ENCODE measurements at regions of chr14 and their contacts with region 1.

Region 1: GRCh38 chr14:63727774-63728728 is at the start of gene SGPP1:
- DNase-seq: peak; percentile 89
- H3K4me3 ChIP-seq: peak within 1 kb of the TSS; percentile 92 to 100 (median 96)
- H3K27ac ChIP-seq: peak within 1 kb of the TSS; percentile 86 to 93 (median 93)
- H3K4me1 ChIP-seq: peaks cover 0 to 25% (median 17%) of the 10 kb centered on the region in 4 donors
- H3K27me3 ChIP-seq: no peaks in the 10 kb centered on the region
- CTCF ChIP-seq: peak in 3 of 4 experiments; percentile 13 to 36 (median 32)
- EP300 ChIP-seq: no peak
- POLR2A ChIP-seq: peak; percentile 30 to 33
- total RNA-seq, gene SGPP1: 18.2 to 20.9 (median 18.9) TPM

Region 2: GRCh38 chr14:63388763-63389431 is 339.2 kb before region 1 on chr14:
- intact Hi-C with region 1: loop called (anchors 10 kb)
- DNase-seq: peak; percentile 78
- H3K4me3 ChIP-seq: no peak overlapping the region
- H3K27ac ChIP-seq: no peak overlapping the region
- H3K4me1 ChIP-seq: no peaks in the 10 kb centered on the region
- H3K27me3 ChIP-seq: no peaks in the 10 kb centered on the region
- CTCF ChIP-seq: peak; percentile 74 to 80 (median 76)
- EP300 ChIP-seq: no peak
- POLR2A ChIP-seq: no peak

Region 3: DNA sequence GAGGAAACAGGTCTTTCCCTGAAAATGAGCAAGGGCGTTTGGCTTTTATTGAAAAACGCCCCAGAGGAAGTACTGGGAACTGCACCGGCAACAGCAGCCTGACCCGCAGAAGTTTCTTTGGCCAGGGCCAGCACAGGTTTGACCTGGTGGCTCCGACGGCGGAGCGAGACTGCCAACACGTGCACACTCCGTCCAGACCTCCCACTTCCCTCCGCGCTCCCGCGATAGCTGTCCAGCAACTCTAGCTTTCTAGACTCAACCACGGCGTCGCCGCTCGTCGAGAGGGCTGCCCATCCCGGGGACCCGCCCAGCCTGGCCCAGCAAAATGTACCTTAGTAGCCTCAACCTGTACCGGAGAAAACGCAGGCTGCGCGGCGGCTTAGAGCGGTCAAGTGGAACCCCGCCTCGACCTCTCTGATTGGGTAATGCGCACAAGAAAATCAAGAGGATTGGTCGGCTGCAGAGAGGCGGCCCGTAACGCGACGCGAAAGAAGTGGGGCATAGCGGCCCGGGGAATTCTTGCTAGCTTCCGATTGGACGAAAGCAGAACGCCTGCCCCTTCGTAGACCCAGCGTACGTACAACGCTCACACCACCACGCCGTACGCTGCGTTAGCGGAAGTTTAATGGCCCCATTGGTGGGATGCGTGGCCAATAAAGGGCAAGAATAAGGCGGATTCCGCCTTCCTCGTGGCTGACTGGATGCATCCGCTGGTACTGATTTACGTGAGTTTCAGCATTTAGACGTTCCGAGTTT is 86.4 kb before region 1 on chr14 and contains the start of gene WDR89:
- intact Hi-C with region 1: loop called (anchors 5 kb)
- DNase-seq: peak; percentile 99
- H3K4me3 ChIP-seq: peak within 1 kb of the TSS; percentile 42 to 69 (median 54)
- H3K27ac ChIP-seq: peak within 1 kb of the TSS; percentile 84 to 95 (median 89)
- H3K4me1 ChIP-seq: peaks cover 0 to 12% (median 6%) of the 10 kb centered on the region in 4 donors
- H3K27me3 ChIP-seq: no peaks in the 10 kb centered on the region
- CTCF ChIP-seq: peak; percentile 45 to 85 (median 75)
- EP300 ChIP-seq: peak in 1 of 4 donors; percentile 10
- POLR2A ChIP-seq: peak in 1 of 2 donors; percentile 46
- total RNA-seq, gene WDR89: 5.0 to 10.0 (median 7.9) TPM

Region 4: DNA sequence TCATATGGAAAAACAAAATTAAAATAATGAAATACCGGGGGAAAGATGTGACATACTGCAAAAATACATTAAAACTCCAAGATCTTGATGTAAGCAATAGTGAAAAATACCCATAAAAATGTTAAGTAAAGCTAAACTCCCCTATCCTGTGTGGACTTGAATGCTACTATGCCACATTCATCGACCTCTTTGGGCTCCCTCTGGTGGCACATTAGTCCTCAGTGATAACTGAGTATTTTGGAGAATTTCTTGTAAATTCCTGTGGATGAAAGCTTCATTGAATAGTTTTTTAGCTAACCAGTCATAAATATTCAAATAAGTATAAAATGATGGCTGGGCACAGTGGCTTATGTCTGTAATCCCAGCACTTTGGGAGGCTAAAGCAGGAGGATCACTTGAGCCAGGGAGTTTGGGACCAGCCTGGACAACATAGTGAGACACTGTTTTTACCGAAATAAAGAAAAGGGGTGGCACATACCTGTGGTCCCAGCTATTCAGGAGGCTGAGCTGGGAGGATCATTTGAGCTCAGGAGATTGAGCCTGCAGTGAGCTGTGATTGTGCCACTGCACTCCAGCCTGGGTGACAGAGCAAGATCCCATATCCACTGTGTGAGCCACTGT is 42.2 kb after region 1 on chr14:
- intact Hi-C with region 1: loop called (anchors 1 kb)
- DNase-seq: no peak
- H3K4me3 ChIP-seq: no peak overlapping the region
- H3K27ac ChIP-seq: no peak overlapping the region
- H3K4me1 ChIP-seq: no peaks in the 10 kb centered on the region
- H3K27me3 ChIP-seq: no peaks in the 10 kb centered on the region
- CTCF ChIP-seq: peak in 2 of 4 experiments; percentile 24 to 38
- EP300 ChIP-seq: no peak
- POLR2A ChIP-seq: no peak

Region 5: DNA sequence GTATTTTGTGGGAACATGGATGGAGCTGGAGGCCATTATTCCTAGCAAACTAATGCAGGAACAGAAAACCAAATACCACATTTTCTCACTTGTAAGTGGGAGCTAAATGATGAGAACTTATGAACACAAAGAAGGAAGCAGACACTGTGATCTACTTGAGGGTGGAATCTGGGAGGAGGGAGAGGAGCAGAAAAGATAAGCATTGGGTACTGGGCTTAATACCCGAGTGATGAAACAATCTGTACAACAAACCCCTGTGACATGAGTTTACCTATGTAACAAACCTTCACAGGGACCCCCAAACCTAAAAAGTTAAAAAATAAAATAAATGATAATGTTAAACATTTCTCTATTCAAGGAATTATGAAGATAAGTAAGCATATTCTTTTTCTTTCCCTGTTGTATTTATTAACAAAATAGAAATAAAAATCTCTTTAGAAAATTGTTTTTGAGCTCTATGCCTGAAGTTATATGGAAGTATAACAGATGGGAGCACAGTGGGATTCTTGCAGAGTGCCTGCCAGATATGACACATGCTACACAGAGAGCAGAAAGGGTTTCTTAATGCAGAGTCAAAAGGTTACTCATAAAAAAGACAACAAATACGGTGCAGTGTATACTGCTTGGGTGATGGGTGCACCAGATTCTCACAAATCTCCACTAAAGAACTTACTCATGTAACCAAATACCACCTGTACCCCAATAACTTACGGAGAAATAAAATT is 72.8 kb after region 1 on chr14:
- intact Hi-C with region 1: no loop called
- DNase-seq: no peak
- H3K4me3 ChIP-seq: no peak overlapping the region
- H3K27ac ChIP-seq: no peak overlapping the region
- H3K4me1 ChIP-seq: peaks cover 0 to 3% (median 0%) of the 10 kb centered on the region in 4 donors
- H3K27me3 ChIP-seq: no peaks in the 10 kb centered on the region
- CTCF ChIP-seq: no peak
- EP300 ChIP-seq: no peak
- POLR2A ChIP-seq: no peak

Region 6: DNA sequence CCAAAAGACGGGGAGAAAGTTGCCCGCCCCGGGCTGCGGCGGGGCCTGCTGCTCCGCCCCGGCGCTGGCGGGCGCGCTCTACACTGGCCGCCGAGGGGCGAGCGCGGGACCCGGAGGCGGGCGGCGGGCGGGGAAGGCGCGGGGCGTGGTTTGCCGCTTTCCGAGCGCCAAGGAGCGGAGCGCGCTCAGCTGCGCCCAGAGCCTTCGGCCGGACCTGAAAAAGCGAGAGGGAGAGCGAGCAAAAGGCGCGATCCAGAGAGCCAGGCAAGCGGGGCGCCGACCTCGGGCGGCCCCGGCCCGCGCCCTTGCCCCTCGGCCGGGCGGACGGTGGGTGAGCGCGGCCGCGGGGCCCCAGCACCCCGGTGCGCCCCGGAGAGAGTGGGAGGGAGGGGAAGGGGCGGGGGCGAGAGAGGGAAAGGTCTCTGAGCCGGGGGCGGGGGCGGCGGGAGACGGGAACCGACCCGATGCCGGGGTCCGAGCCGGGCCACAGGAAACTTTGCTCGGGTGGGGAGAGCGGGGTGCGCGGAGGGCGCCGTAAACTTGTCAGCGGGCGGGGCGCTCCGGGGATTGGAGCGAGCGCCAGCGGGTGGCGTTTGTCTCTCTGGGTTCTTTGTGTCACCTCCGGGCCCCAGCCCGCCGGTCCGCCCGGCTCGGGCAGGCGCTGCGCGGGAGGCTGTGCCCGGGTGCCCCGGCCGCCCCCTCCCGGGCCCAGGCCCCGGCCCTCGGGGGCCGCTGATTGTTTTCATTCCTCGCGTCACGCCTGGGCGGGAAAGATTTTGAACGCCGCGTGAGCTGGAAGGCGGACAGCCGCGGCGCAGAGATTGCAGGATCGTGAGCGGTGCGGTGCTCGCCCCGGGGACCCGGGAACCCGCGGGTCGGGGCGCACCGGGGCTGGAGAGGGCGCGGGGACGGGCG is 125.0 kb after region 1 on chr14 and contains the start of gene SYNE2:
- intact Hi-C with region 1: loop called (anchors 5 kb)
- DNase-seq: peak; percentile 84
- H3K4me3 ChIP-seq: peak within 1 kb of the TSS; percentile 85 to 87 (median 86)
- H3K27ac ChIP-seq: peak within 1 kb of the TSS; percentile 90 to 92 (median 91)
- H3K4me1 ChIP-seq: peaks cover 0 to 12% (median 8%) of the 10 kb centered on the region in 4 donors
- H3K27me3 ChIP-seq: no peaks in the 10 kb centered on the region
- CTCF ChIP-seq: peak in 1 of 4 experiments; percentile 30
- EP300 ChIP-seq: no peak
- POLR2A ChIP-seq: no peak
- total RNA-seq, gene SYNE2: 40.7 to 70.6 (median 56.2) TPM

Region 7: DNA sequence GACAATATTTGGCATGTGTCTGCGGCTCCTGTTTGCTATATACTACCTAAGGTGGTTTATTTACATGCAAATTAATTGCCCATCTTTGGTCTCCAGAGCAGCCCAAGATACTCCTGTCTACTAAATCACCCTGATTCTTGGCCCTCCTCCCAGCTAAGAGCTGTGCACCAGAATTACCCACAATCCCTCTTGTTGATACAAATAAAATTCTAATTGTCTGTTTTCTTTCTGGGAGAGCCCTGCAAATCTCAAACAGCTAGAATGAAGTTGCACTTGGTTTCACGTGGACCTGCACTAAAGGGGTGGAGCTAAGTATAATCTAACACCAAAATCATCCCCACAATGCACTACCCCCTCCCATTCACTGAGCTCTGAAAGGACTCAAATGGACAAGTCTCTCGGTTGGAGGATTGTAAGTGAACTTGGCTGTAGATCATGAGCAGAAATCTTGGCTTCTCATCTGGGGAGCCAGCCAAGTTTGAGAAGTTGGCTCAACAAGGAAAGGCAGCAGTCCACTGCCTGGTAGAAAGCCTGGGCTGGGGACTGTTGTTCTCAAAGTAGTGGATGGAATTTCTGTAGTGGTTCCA is 1367.7 kb after region 1 on chr14:
- intact Hi-C with region 1: loop called (anchors 10 kb)
- DNase-seq: peak; percentile 91
- H3K4me3 ChIP-seq: no peak overlapping the region
- H3K27ac ChIP-seq: peak overlapping the region; percentile 59 to 96 (median 75)
- H3K4me1 ChIP-seq: peaks cover 0 to 81% (median 75%) of the 10 kb centered on the region in 4 donors
- H3K27me3 ChIP-seq: no peaks in the 10 kb centered on the region
- CTCF ChIP-seq: no peak
- EP300 ChIP-seq: no peak
- POLR2A ChIP-seq: no peak